ENCODE measurements at regions of chr15 and their contacts with region 1.

Region 1: GRCh38 chr15:100627789-100628395 is 25.5 kb downstream of the ASB7 start:
- DNase-seq: peak in 3 of 4 donors; percentile 43 to 83 (median 75)
- ATAC-seq: peak; percentile 99
- H3K4me3 ChIP-seq: no peak overlapping the region
- H3K27ac ChIP-seq: no peak overlapping the region
- H3K4me1 ChIP-seq: peaks cover 0 to 5% of the 10 kb centered on the region in 2 donors
- H3K27me3 ChIP-seq: no peaks in the 10 kb centered on the region
- CTCF ChIP-seq: peak; percentile 84 to 92

Region 2: GRCh38 chr15:100753503-100753902 is 125.6 kb after region 1 on chr15:
- intact Hi-C with region 1: no loop called
- DNase-seq: no peak
- ATAC-seq: no peak
- H3K4me3 ChIP-seq: no peak overlapping the region
- H3K27ac ChIP-seq: no peak overlapping the region
- H3K4me1 ChIP-seq: no peaks in the 10 kb centered on the region
- H3K27me3 ChIP-seq: peaks cover 0 to 10% of the 10 kb centered on the region in 2 donors
- CTCF ChIP-seq: no peak

Region 3: GRCh38 chr15:100873029-100873677 is 245.3 kb after region 1 on chr15:
- intact Hi-C with region 1: loop called in 1 of 2 experiments (anchors 5 kb)
- DNase-seq: peak in 2 of 4 donors; percentile 60 to 83
- ATAC-seq: peak; percentile 94
- H3K4me3 ChIP-seq: no peak overlapping the region
- H3K27ac ChIP-seq: no peak overlapping the region
- H3K4me1 ChIP-seq: no peaks in the 10 kb centered on the region
- H3K27me3 ChIP-seq: peaks cover 3 to 42% of the 10 kb centered on the region in 2 donors
- CTCF ChIP-seq: peak; percentile 87 to 89

Region 4: DNA sequence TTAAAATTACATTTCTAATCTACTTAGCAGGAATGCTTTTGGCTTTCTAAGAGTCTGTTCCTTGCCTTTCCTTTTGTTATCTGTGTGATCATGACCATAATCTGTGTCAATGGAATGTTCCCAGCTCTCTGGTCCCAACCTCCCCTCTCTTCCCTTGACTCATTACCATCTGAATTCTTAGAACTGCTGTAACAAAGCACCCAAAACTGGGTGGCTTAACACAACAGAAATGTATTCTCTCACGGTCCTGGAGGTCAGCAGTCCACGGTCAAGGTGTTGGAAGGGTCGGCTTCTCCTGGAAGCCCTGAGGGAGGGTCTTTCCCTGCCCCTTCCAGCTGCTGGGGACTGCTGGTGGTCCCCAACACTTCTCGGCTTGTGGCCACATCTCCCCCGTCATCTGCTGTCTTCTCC is 372.4 kb after region 1 on chr15:
- intact Hi-C with region 1: loop called in 1 of 2 experiments (anchors 5 kb)
- DNase-seq: no peak
- ATAC-seq: no peak
- H3K4me3 ChIP-seq: no peak overlapping the region
- H3K27ac ChIP-seq: no peak overlapping the region
- H3K4me1 ChIP-seq: peaks cover 0 to 7% of the 10 kb centered on the region in 2 donors
- H3K27me3 ChIP-seq: no peaks in the 10 kb centered on the region
- CTCF ChIP-seq: no peak

Measured in left lung (tissue), 14 donors.